ENCODE measurements at regions of chr11 and their contacts with region 1.

Region 1: GRCh38 chr11:94597896-94598295 is 30.7 kb downstream of the PIWIL4 start:
- ATAC-seq: no peak
- H3K4me3 ChIP-seq: no peak overlapping the region
- H3K27ac ChIP-seq: no peak overlapping the region
- H3K4me1 ChIP-seq: peaks cover 0 to 2% of the 10 kb centered on the region in 2 donors

Region 2: DNA sequence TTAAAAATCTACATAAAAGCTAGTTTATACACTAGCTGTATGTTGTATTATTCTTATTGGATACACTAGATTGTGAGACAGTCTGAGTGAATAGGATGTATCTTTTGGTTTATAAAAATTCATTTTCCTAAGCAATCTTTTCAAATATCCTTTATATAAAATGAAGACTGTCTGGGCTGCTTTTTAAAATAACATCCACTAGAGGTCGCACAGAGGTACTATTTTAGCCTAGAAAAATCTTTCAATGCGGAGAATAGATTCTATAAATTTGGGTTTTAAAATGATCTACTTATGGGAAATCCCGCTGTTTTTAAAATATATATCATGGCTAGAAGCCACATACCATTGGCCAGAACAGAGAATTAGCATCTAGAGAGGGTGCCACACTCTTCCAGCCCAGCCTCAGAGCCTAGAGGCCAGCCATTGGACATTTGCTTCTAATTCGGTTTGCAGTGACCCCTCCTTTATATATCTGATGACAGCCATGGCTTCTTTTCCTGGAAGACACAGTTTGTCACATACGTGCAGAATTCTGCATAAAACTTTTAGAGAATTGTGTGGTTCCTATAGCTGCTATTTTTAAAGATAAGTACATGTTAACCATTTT is 78.3 kb before region 1 on chr11:
- in situ Hi-C with region 1: loop called in 1 of 9 experiments (anchors 5 kb)
- ATAC-seq: peak in 4 of 8 experiments; percentile 29 to 61 (median 58)
- H3K4me3 ChIP-seq: no peak overlapping the region
- H3K27ac ChIP-seq: no peak overlapping the region
- H3K4me1 ChIP-seq: no peaks in the 10 kb centered on the region

Region 3: DNA sequence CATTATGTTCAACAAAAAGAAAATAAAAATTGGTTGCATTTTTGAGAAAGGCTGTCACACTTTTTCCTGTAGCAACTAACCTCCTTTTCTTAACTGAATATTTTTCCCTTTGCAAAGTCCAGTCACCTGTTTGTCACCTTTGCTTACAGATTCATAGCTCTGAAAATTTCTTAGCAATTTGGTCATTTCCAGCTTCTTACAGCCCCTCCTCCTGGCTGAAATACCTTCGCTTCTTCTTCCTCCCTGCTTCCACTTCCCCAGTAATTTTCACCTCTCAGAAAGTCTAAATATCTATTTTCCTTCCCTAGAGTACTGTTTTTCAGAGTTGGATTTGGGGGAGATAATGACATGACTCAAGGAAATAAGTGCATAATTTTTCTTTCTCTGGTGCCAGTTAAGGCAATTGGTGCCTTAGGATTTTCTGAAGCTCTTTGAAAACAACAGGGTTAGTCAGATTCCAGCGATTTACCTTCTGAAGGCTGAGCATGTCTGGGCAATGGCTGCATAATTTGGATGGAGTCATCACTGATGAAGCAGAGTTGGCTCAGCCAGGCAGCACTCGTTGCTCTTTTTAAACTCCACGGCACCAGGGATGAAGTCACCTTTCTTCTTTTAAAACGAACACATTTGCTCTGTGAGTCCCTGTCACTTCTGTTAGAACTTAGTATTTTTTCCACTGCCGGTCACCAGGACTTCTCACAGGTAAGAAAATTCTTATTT is 108.2 kb after region 1 on chr11:
- in situ Hi-C with region 1: no loop called
- ATAC-seq: peak in 5 of 8 experiments; percentile 33 to 93 (median 56)
- H3K4me3 ChIP-seq: no peak overlapping the region
- H3K27ac ChIP-seq: no peak overlapping the region
- H3K4me1 ChIP-seq: no peaks in the 10 kb centered on the region

Region 4: GRCh38 chr11:94776351-94777321 is 178.7 kb after region 1 on chr11:
- in situ Hi-C with region 1: no loop called
- ATAC-seq: peak; percentile 56 to 93 (median 88)
- H3K4me3 ChIP-seq: no peak overlapping the region
- H3K27ac ChIP-seq: peak overlapping the region; percentile 9 to 41
- H3K4me1 ChIP-seq: peaks cover 12 to 22% of the 10 kb centered on the region in 2 donors

Region 5: GRCh38 chr11:95364324-95365295 is 766.7 kb after region 1 on chr11:
- in situ Hi-C with region 1: no loop called
- ATAC-seq: peak in 2 of 8 experiments; percentile 10 to 65
- H3K4me3 ChIP-seq: no peak overlapping the region
- H3K27ac ChIP-seq: no peak overlapping the region
- H3K4me1 ChIP-seq: peaks cover 22 to 23% of the 10 kb centered on the region in 2 donors